Spleen (tissue), 13 donors: ENCODE measurements at regions of chr7 and their contacts with region 1.

Region 1: GRCh38 chr7:113013761-113014449 is 72.7 kb downstream of the GPR85 start:
- DNase-seq: no peak
- H3K4me3 ChIP-seq: no peak overlapping the region
- H3K27ac ChIP-seq: no peak overlapping the region
- H3K4me1 ChIP-seq: no peaks in the 10 kb centered on the region
- H3K27me3 ChIP-seq: peaks cover 0 to 5% (median 0%) of the 10 kb centered on the region in 7 donors
- CTCF ChIP-seq: no peak
- POLR2A ChIP-seq: no peak

Region 2: DNA sequence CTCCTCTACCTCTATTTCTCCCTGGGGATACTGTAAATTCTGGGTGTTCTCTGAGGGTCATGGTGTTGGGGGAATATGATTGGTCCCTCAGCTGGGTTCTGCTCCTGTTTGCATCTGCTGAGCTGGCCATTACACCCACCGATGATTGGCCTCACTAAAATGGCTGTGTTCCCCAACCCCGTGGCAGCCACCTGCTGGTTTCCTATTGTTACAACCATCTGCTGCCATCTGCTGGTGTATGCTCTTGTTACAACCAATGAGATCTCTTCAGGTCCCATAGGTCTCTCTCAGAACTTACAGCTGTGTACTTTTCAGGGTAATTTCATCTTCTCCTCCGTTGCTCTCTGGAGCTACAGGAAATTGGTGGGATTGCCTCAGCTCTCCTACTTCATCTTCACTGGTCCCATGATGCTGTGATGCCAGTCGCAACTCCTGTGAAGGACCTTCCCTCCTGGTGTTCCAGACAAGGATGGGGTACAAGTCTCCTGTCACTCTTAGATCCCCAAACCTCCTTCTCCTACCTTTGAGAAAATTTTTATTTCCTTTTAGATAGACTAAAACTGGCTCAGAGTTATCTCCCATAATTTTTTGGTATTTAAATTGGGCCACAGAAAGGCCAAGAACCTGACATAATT is 407.9 kb after region 1 on chr7:
- intact Hi-C with region 1: loop called (anchors 5 kb)
- DNase-seq: peak; percentile 80
- H3K4me3 ChIP-seq: no peak overlapping the region
- H3K27ac ChIP-seq: no peak overlapping the region
- H3K4me1 ChIP-seq: peaks cover 0 to 6% (median 0%) of the 10 kb centered on the region in 6 donors
- H3K27me3 ChIP-seq: no peaks in the 10 kb centered on the region
- CTCF ChIP-seq: peak; percentile 37 to 84 (median 70)
- POLR2A ChIP-seq: no peak